SK-N-SH (cell line): ENCODE measurements at regions of chr1 and their contacts with region 1.

Region 1: DNA sequence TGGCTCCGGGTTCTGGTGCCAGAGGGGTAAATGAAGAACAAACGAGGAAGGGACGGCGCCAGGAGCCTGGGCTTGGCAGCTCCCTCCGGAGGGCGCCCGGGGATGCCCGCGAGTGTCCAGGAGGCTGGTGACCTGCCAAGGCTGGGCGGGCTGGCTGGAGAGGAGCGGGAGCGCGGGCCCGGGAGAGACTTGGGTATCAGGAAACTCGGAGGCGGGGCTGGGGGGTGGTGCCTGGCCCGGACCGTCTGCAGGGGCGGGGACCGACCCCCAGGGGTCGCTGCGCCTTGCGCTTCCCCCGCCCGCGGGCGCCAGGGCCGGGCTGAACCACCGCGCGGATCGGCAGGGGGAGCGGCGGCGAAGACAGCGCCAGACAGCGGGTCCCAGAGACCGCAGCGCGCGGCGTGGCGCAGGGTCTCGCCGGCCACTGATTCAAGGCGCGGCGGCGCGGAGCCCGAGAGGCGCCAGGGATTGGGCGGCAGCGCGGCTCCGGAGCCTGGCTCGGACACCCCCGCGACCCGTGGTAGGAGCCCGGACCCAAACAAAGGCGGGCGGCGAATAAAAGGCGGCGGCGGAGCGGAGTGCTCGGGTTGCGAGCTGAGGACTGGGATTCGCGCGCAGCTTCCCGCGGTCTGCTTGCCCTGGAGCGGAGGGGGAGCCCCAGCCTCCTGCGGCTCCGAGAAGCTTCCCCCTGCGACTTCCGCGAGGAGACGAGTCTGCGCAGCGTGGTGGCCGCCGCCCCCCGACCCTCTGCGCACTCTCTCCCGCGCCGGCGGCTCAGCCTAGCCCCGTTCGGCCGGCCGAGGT is at the start of gene DISP3:
- DNase-seq: peak; percentile 99
- H3K4me3 ChIP-seq: peak within 1 kb of the TSS; percentile 66 to 75
- H3K27ac ChIP-seq: peak within 1 kb of the TSS in 1 of 2 experiments; percentile 89; a peak in 2 of 4 replicates
- H3K4me1 ChIP-seq: peaks cover 0 to 50% of the 10 kb centered on the region in 2 experiments; a peak in 2 of 4 replicates
- H3K27me3 ChIP-seq: no peaks in the 10 kb centered on the region
- CTCF ChIP-seq: peak; percentile 62
- EP300 ChIP-seq: peak in 1 of 2 experiments; percentile 55; a peak in 1 of 4 replicates
- RAD21 ChIP-seq: peak; percentile 50
- polyA plus RNA-seq, gene DISP3: 0.08 and 0.15 TPM in 2 replicates

Region 2: GRCh38 chr1:11285883-11286734 is 192.7 kb before region 1 on chr1:
- CTCF ChIA-PET with region 1: interaction called, 10 read pairs
- POLR2A ChIA-PET with region 1: no interaction called
- DNase-seq: peak; percentile 49
- H3K4me3 ChIP-seq: no peak overlapping the region
- H3K27ac ChIP-seq: no peak overlapping the region
- H3K4me1 ChIP-seq: peaks cover 0 to 10% of the 10 kb centered on the region in 2 experiments; a peak in 2 of 4 replicates
- H3K27me3 ChIP-seq: no peaks in the 10 kb centered on the region
- CTCF ChIP-seq: peak; percentile 55
- EP300 ChIP-seq: no peak
- RAD21 ChIP-seq: peak; percentile 81

Region 3: GRCh38 chr1:11345971-11346715 is 132.6 kb before region 1 on chr1:
- CTCF ChIA-PET with region 1: interaction called, 13 read pairs
- POLR2A ChIA-PET with region 1: interaction called, 7 read pairs
- DNase-seq: no peak
- H3K4me3 ChIP-seq: no peak overlapping the region
- H3K27ac ChIP-seq: no peak overlapping the region
- H3K4me1 ChIP-seq: peaks cover 0 to 22% of the 10 kb centered on the region in 2 experiments; a peak in 1 of 4 replicates
- H3K27me3 ChIP-seq: no peaks in the 10 kb centered on the region; the same call in 1 of the 2 replicates
- CTCF ChIP-seq: no peak
- EP300 ChIP-seq: no peak
- RAD21 ChIP-seq: no peak

Region 4: GRCh38 chr1:11422686-11423085 is 56.1 kb before region 1 on chr1:
- CTCF ChIA-PET with region 1: no interaction called
- POLR2A ChIA-PET with region 1: no interaction called
- DNase-seq: no peak
- H3K4me3 ChIP-seq: no peak overlapping the region
- H3K27ac ChIP-seq: no peak overlapping the region
- H3K4me1 ChIP-seq: peaks cover 0 to 6% of the 10 kb centered on the region in 2 experiments; a peak in 1 of 4 replicates
- H3K27me3 ChIP-seq: no peaks in the 10 kb centered on the region
- CTCF ChIP-seq: no peak
- EP300 ChIP-seq: no peak
- RAD21 ChIP-seq: no peak

Region 5: GRCh38 chr1:11494771-11495170 is 16.0 kb after region 1 on chr1:
- CTCF ChIA-PET with region 1: interaction called, 16 read pairs
- POLR2A ChIA-PET with region 1: interaction called, 3 read pairs
- DNase-seq: no peak
- H3K4me3 ChIP-seq: no peak overlapping the region
- H3K27ac ChIP-seq: no peak overlapping the region
- H3K4me1 ChIP-seq: peaks cover 0 to 11% of the 10 kb centered on the region in 2 experiments; a peak in 1 of 4 replicates
- H3K27me3 ChIP-seq: no peaks in the 10 kb centered on the region
- CTCF ChIP-seq: no peak
- EP300 ChIP-seq: no peak
- RAD21 ChIP-seq: no peak

Region 6: DNA sequence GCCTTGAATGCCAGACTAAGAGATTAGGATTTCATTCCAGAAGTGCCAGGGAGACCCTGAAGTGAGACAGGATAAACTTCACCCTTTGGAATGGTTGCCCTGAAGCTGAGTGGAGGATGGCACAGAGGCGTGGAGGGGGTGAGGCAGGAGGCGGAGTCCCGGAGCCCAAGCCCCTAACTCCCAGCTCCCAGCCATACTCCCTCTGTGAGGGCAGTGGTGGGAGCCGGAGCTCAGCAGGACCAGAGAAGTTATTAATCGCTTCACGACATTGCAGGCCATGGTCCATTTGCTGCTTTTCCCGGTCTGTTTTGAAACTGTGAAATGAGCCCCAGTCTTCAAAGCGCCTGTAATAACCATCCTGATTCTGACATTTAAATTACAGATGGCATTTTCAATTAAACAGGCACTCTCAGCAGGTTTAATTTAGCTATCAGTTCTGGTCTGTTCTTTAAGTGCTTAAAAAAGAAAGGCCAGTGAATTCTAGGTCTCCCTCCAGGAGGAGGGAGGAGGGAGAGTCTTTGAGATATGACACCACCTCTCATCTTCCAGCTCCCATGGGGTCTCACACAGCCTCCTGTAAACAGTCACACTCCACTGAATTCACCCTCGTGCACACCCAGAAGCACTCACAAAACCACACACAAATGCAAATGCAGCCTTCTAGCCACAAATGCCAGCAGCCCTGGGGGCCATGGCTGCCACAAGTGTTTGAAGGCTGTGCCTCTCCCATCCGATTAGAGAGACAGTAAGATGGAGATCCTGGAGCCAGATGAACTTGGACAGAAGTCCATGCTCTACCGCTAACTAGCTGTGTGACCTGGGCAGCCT is 155.8 kb after region 1 on chr1:
- CTCF ChIA-PET with region 1: interaction called, 36 read pairs
- POLR2A ChIA-PET with region 1: interaction called, 7 read pairs
- DNase-seq: no peak
- H3K4me3 ChIP-seq: no peak overlapping the region
- H3K27ac ChIP-seq: no peak overlapping the region
- H3K4me1 ChIP-seq: peaks cover 0 to 12% of the 10 kb centered on the region in 2 experiments; a peak in 1 of 4 replicates
- H3K27me3 ChIP-seq: peaks cover 8% of the 10 kb centered on the region; the same call in 1 of the 2 replicates
- CTCF ChIP-seq: no peak
- EP300 ChIP-seq: no peak
- RAD21 ChIP-seq: no peak